ENCODE measurements at regions of chr21 and their contacts with region 1.

Region 1: DNA sequence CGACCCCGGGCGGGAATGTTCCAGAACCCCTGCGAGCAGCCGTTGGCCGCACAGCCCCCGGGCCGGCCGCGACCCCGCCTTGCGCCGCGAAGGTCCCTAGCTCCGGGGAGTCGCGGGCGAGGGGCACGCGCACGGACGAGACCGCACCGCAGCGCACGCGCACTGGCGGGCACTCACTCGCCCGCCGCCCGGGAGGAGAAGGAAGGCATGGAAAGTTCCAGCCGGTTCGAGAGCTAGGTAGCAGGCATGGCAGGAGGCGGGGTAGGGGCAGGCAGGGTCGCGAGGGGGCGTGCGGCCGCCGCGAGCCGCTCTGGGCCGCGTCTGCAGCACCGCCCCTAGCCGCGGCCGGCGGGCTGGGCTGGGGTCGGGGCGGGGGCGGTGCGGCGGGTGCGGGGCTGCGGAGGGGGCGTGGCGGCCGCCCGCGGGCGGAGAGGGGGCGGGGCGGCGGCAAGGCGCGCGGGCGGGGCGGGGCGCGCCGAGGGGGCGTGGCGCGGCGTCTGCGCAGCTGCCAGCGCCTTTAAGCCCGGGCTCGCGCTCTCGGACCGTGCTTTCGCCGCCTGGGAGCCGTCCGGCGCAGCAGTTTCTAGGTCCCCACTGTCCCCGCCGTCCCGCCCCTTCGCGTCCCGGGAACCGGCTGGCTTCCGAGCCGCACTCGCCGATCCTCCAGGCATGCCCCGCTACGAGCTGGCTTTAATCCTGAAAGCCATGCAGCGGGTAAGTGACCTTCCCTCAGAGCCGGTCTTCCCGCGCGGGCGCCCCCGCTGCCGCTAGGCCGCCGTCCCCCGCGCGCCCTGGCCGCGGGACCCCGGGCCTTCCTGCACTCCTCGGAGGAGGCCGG is at the starts of genes MRPS6 and SLC5A3:
- DNase-seq: peak; percentile 91
- H3K4me3 ChIP-seq: peak within 1 kb of the TSS; percentile 69 to 81 (median 73)
- H3K27ac ChIP-seq: peak within 1 kb of the TSS; percentile 82 to 93 (median 89)
- H3K4me1 ChIP-seq: peaks cover 0 to 45% (median 42%) of the 10 kb centered on the region in 4 donors
- H3K27me3 ChIP-seq: no peaks in the 10 kb centered on the region
- CTCF ChIP-seq: no peak
- EP300 ChIP-seq: no peak
- POLR2A ChIP-seq: peak; percentile 62 to 72
- total RNA-seq, gene MRPS6: 41.0 to 95.8 (median 70.7) TPM
- total RNA-seq, gene SLC5A3: 20.6 to 41.8 (median 22.7) TPM

Region 2: GRCh38 chr21:33641336-33642026 is 431.8 kb before region 1 on chr21 and contains the start of gene CRYZL1:
- intact Hi-C with region 1: loop called (anchors 10 kb)
- DNase-seq: peak; percentile 100
- H3K4me3 ChIP-seq: peak within 1 kb of the TSS; percentile 70 to 99 (median 92)
- H3K27ac ChIP-seq: peak within 1 kb of the TSS; percentile 94 to 97 (median 96)
- H3K4me1 ChIP-seq: peaks cover 0 to 34% (median 29%) of the 10 kb centered on the region in 4 donors
- H3K27me3 ChIP-seq: no peaks in the 10 kb centered on the region
- CTCF ChIP-seq: no peak
- EP300 ChIP-seq: peak in 1 of 4 donors; percentile 10
- POLR2A ChIP-seq: peak in 1 of 2 donors; percentile 74
- total RNA-seq, gene CRYZL1: 46.6 to 90.8 (median 62.7) TPM

Region 3: GRCh38 chr21:33924079-33924765 is 149.0 kb before region 1 on chr21:
- intact Hi-C with region 1: loop called (anchors 2 kb)
- DNase-seq: peak; percentile 93
- H3K4me3 ChIP-seq: no peak overlapping the region
- H3K27ac ChIP-seq: peak overlapping the region in 3 of 4 donors; percentile 64 to 78 (median 68)
- H3K4me1 ChIP-seq: peaks cover 0 to 13% (median 11%) of the 10 kb centered on the region in 4 donors
- H3K27me3 ChIP-seq: no peaks in the 10 kb centered on the region
- CTCF ChIP-seq: peak; percentile 87 to 96 (median 94)
- EP300 ChIP-seq: no peak
- POLR2A ChIP-seq: no peak

Region 4: DNA sequence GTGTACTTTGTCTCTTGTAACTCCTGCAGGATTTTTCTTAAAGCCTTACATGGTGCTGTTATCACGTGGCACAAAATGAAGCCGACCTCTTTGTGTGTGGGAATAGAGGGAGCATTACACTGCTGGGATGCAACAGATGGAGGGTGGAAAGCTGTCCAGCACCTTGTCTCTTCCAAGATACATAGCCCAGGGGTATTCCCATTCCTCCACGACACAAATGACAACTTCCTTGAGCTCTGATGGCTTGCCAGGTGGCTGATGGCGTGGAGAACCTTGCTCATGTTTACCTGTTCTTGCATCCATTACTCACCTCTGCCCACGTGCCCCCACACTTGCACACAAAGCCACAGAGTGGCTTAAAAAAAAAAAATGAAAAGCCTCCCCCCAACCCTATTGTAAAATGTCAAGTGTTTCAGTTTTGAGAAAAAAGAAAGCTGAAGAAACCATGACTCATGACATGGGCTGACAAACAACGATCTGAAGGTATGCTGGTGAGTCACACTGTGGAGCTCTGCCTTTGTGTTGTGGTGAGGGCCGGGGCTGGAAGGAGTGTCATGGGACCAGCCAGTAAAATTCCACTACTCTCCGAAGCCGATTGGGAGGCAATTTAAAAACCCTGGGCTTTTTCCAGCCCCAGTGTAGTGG is 125.7 kb before region 1 on chr21:
- intact Hi-C with region 1: loop called (anchors 2 kb)
- DNase-seq: peak; percentile 96
- H3K4me3 ChIP-seq: peak overlapping the region in 3 of 4 donors; percentile 19 to 26 (median 21)
- H3K27ac ChIP-seq: peak overlapping the region; percentile 82 to 94 (median 88)
- H3K4me1 ChIP-seq: peaks cover 0 to 33% (median 31%) of the 10 kb centered on the region in 4 donors
- H3K27me3 ChIP-seq: no peaks in the 10 kb centered on the region
- CTCF ChIP-seq: no peak
- EP300 ChIP-seq: peak in 2 of 4 donors; percentile 12 to 92
- POLR2A ChIP-seq: no peak

Region 5: GRCh38 chr21:34129039-34129891 is 56.0 kb after region 1 on chr21:
- intact Hi-C with region 1: loop called (anchors 2 kb)
- DNase-seq: peak; percentile 85
- H3K4me3 ChIP-seq: peak overlapping the region in 3 of 4 donors; percentile 15 to 31 (median 16)
- H3K27ac ChIP-seq: peak overlapping the region; percentile 80 to 89 (median 82)
- H3K4me1 ChIP-seq: peaks cover 0 to 88% (median 85%) of the 10 kb centered on the region in 4 donors
- H3K27me3 ChIP-seq: no peaks in the 10 kb centered on the region
- CTCF ChIP-seq: peak in 3 of 4 experiments; percentile 13 to 36 (median 22)
- EP300 ChIP-seq: peak in 1 of 4 donors; percentile 34
- POLR2A ChIP-seq: no peak

Region 6: GRCh38 chr21:34202553-34203372 is 129.5 kb after region 1 on chr21:
- intact Hi-C with region 1: loop called (anchors 2 kb)
- DNase-seq: peak; percentile 84
- H3K4me3 ChIP-seq: peak overlapping the region in 3 of 4 donors; percentile 46 to 54 (median 49)
- H3K27ac ChIP-seq: peak overlapping the region; percentile 71 to 87 (median 84)
- H3K4me1 ChIP-seq: peaks cover 0 to 74% (median 67%) of the 10 kb centered on the region in 4 donors
- H3K27me3 ChIP-seq: no peaks in the 10 kb centered on the region
- CTCF ChIP-seq: no peak
- EP300 ChIP-seq: no peak
- POLR2A ChIP-seq: no peak

Region 7: DNA sequence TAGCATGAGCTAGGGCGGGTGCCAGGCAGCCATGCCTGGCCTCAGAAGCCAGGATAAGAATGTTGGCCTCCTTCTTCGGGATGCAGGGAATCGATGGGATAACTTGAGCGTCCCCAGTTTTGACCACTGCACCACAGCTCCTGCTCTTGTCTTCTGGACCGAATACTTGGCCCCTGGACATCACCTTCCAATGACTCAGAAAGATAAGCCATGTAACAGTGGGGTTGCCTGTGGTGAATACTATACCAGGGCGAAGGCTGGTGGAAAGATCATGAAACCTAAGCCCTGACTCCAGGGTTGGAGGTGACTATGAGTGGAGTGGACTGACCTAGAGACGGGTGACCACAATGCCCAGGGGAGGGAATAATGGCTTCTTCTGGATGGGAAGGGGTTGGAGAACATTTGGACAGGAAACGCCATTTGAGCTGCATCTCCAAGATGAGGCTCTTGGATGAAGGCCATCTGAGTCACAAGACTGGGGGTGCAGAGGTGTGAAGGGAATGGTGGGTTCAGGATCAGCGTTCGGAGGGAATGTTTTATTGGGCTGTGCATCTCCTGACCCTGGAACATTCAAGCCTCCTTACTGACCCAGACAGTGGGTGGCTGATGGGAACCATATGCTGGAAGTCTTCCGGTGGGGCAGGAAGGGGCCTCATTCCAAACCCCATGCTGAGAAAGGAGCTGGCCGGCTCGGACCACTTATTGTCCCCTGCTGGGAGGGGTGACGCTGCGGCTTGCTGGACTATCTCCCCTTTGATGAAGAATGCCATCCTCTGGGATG is 272.0 kb after region 1 on chr21:
- intact Hi-C with region 1: loop called (anchors 5 kb)
- DNase-seq: no peak
- H3K4me3 ChIP-seq: no peak overlapping the region
- H3K27ac ChIP-seq: peak overlapping the region; percentile 53 to 78 (median 60)
- H3K4me1 ChIP-seq: peaks cover 0 to 57% (median 42%) of the 10 kb centered on the region in 4 donors
- H3K27me3 ChIP-seq: no peaks in the 10 kb centered on the region
- CTCF ChIP-seq: no peak
- EP300 ChIP-seq: no peak
- POLR2A ChIP-seq: no peak

Region 8: GRCh38 chr21:34670220-34670961 is 597.1 kb after region 1 on chr21:
- intact Hi-C with region 1: no loop called
- DNase-seq: no peak
- H3K4me3 ChIP-seq: peak overlapping the region; percentile 26 to 47 (median 38)
- H3K27ac ChIP-seq: peak overlapping the region in 1 of 4 donors; percentile 25
- H3K4me1 ChIP-seq: peaks cover 0 to 20% (median 18%) of the 10 kb centered on the region in 4 donors
- H3K27me3 ChIP-seq: peaks cover 17 to 72% (median 46%) of the 10 kb centered on the region in 3 donors
- CTCF ChIP-seq: no peak
- EP300 ChIP-seq: no peak
- POLR2A ChIP-seq: no peak